GM10248 (cell line): ENCODE measurements at regions of chr4 and their contacts with region 1.

Region 1: GRCh38 chr4:185332575-185333464 is 62.9 kb downstream of the LRP2BP start:
- DNase-seq: no peak
- CTCF ChIP-seq: no peak

Region 2: GRCh38 chr4:185309770-185310169 is 23.1 kb before region 1 on chr4:
- CTCF ChIA-PET with region 1: interaction called, 31 read pairs
- POLR2A ChIA-PET with region 1: no interaction called
- DNase-seq: peak; percentile 65
- CTCF ChIP-seq: no peak